Sigmoid colon (tissue), 7 donors: ENCODE measurements at regions of chr10 and their contacts with region 1.

Region 1: GRCh38 chr10:100185364-100186252 is at the start of gene ERLIN1:
- DNase-seq: peak; percentile 95
- H3K4me3 ChIP-seq: peak within 1 kb of the TSS; percentile 72 to 90 (median 85)
- H3K27ac ChIP-seq: peak within 1 kb of the TSS; percentile 81 to 87 (median 82)
- H3K4me1 ChIP-seq: peaks cover 0 to 26% (median 23%) of the 10 kb centered on the region in 4 donors
- H3K27me3 ChIP-seq: no peaks in the 10 kb centered on the region
- CTCF ChIP-seq: no peak
- EP300 ChIP-seq: peak in 1 of 4 donors; percentile 61
- POLR2A ChIP-seq: peak; percentile 11 to 31
- total RNA-seq, gene ERLIN1: 7.9 to 11.9 (median 9.7) TPM

Region 2: DNA sequence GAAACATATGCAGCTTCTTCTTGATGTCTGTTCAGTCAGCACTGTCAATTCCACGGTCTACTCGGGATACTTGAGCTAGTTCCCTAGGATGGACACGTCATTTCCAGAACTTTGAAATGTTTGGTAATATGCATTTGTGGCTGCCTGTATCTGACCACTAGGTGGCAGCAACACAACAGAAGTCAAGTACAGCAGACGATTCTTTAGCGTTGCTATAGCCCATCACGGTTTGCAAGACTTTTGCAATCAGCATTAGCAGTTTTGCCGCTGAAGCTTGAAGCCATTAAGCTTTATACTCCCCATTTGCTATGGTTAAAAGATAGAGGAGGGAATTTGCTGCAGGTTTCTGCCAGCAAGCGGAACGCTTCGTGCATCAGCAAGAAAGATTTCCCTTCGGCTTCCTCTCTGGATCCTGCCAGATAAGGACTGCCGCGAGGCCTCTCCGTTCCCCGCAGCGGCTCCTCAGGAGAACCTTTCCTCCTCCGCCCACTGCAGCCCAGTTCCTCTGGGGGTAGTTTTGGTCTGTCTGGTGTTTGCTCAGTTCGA is 339.7 kb before region 1 on chr10:
- intact Hi-C with region 1: loop called (anchors 10 kb)
- DNase-seq: peak; percentile 91
- H3K4me3 ChIP-seq: peak overlapping the region in 3 of 4 donors; percentile 26 to 41 (median 32)
- H3K27ac ChIP-seq: peak overlapping the region in 1 of 4 donors; percentile 60
- H3K4me1 ChIP-seq: peaks cover 0 to 16% (median 4%) of the 10 kb centered on the region in 4 donors
- H3K27me3 ChIP-seq: no peaks in the 10 kb centered on the region
- CTCF ChIP-seq: peak; percentile 88 to 96 (median 90)
- EP300 ChIP-seq: no peak
- POLR2A ChIP-seq: no peak

Region 3: DNA sequence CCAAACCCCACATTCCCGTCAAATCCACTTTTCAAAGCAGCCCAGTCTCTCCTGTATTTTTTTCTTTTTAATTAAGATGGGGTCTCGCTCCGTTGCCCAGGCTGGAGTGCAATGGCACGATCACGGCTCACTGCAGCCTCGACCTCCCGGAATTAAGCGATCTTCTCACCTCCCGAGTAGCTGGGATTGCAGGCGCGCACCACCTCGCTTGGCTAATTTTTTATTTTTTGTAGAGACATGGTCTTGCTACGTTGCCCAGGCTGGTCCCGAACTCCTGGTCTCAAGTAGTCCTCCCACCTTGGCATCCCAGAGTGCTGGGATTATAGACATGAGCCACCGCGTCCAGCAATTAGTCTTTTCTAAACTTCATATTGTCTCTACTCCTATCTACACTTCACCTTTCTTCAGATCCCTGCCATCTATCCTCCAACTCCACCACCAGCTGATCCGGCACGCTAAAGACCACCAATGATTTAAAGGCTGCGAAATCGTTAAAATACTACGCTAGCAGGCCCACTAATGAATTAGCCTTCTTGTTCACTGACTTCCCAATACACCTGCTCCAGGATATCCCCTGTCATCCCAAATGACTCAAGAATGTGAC is 44.3 kb after region 1 on chr10:
- intact Hi-C with region 1: loop called (anchors 2 kb)
- DNase-seq: no peak
- H3K4me3 ChIP-seq: peak overlapping the region; percentile 89 to 97 (median 94)
- H3K27ac ChIP-seq: peak overlapping the region; percentile 80 to 88 (median 83)
- H3K4me1 ChIP-seq: peaks cover 0 to 16% (median 13%) of the 10 kb centered on the region in 4 donors
- H3K27me3 ChIP-seq: no peaks in the 10 kb centered on the region
- CTCF ChIP-seq: no peak
- EP300 ChIP-seq: no peak
- POLR2A ChIP-seq: no peak

Region 4: DNA sequence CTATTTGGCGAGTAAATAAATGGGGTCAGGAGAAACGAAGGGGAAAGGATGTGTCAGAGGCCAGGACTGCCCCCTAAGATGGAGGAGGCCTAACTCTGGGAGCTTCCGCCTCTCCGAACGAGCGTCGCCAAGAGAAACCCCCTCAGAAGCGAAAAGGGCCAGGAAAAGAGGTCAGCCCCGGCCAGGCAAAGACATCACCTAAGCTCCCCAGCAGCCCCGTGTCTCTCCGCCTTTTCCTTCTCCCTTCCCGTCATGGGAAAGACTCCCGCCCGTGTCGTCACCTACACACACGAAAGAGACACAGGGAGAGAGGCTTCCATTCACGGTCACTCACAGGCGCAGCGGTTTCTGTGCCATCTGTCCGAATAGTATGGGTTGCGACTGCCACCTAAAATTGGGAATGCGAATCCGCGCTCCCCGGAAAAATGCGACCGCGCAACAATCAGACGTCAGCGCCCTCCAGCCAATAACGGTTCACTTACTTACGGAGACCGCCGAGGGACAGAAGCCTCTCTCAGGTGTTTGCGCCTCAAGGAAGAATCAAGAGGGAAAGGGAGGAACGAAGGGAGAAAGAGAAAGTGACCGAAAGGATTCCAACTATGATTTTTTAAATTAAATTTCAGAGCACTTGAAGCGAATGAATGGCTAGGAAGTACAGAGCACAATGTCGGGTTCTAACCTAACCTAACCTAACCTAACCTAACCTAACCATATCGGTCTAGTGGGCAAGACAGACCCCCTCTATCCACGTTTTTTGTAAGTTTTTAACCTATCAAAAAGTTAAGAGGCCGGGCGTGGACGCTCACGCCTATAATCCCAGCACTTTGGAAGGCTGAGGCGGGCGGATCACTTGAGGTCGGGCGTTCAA is 81.9 kb after region 1 on chr10 and contains the start of gene CWF19L1:
- intact Hi-C with region 1: loop called (anchors 5 kb)
- DNase-seq: peak; percentile 94
- H3K4me3 ChIP-seq: peak within 1 kb of the TSS; percentile 51 to 98 (median 83)
- H3K27ac ChIP-seq: peak within 1 kb of the TSS; percentile 76 to 90 (median 84)
- H3K4me1 ChIP-seq: peaks cover 0 to 20% (median 19%) of the 10 kb centered on the region in 4 donors
- H3K27me3 ChIP-seq: no peaks in the 10 kb centered on the region
- CTCF ChIP-seq: no peak
- EP300 ChIP-seq: peak in 1 of 4 donors; percentile 33
- POLR2A ChIP-seq: peak in 1 of 2 donors; percentile 56
- total RNA-seq, gene CWF19L1: 13.8 to 17.1 (median 16.1) TPM